ENCODE measurements at regions of chr3 and their contacts with region 1.

Region 1: DNA sequence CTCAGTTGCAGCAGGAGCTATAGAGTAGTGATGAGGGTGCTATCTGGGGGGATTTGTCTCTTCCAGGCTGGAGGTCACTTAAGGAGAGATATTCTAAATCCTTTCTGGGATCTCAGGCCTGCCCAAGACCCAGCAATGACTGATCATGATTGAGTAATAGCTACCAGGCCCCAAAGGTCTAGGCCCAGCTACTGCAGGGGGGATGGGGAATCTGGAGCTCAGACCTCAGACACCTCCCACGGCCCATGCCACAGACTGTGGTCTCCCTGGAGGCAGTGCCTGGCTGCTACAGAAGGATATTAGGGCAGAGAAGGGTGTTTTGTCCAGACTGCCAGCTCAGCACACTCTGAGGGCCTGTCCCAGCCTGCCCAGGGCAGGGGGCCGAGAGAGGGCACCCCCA is 6.9 kb downstream of the SLC38A3 start:
- DNase-seq: no peak
- H3K4me3 ChIP-seq: no peak overlapping the region
- H3K27ac ChIP-seq: peak overlapping the region in 54 of 59 donors; percentile 76 to 99 (median 95)
- H3K27me3 ChIP-seq: no peaks in the 10 kb centered on the region
- CTCF ChIP-seq: no peak

Region 2: DNA sequence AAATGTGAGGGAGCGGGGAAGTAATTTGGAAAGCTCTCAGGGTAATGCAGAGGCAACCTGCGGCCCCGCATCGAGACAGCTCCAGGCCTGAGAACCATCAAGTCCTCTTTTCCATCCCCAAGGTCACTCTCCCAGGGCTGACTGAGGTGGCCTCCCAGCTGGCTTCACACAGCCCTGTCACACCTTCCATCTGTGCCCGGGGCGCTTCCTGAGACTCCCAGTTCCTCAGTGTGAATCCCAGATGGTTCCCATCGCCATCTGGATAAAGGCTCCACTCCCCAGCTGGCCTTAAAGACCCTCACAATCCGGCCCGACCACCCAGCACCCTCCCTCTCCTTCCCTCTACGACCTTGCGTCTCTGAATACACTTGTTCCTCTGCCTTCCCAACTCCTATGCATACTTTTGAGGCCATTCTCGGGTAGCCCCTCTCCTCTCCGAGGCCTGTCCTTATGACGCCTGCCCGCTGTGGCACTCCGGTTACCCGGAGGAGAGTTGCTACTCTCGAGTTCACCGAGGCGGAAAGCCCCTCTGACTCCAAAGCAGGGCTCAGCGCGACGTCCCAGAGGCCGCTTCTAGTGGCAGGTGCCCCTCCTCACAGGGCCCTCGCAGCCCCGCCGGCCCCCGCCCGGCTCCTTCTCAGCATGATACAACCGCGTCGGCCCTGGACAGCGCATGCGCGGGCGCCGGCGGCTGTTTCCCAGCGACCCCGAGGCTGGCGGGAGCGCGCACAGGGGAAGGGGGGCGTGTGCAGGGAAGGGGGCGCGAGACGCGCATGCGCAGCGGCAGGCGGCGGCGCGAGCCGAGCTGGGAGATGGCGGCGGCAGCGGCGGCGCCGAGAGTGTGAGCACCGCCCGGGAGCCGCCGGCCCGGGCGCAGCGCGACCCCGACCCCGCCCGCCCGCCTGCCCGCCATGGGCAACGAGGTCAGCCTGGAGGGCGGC is 658.0 kb before region 1 on chr3 and contains the start of gene BSN:
- intact Hi-C with region 1: loop called in 1 of 2 experiments (anchors 10 kb)
- DNase-seq: peak; percentile 82 to 92 (median 88)
- H3K4me3 ChIP-seq: peak within 1 kb of the TSS; percentile 66 to 95 (median 86)
- H3K27ac ChIP-seq: peak within 1 kb of the TSS in 58 of 59 donors; percentile 49 to 98 (median 86)
- H3K27me3 ChIP-seq: no peaks in the 10 kb centered on the region
- CTCF ChIP-seq: peak in 23 of 56 donors; percentile 9 to 40 (median 26)
- total RNA-seq, gene BSN: 47.8 to 218 (median 156) TPM

Region 3: GRCh38 chr3:49998326-49998725 is 213.6 kb before region 1 on chr3:
- intact Hi-C with region 1: no loop called
- DNase-seq: no peak
- H3K4me3 ChIP-seq: no peak overlapping the region
- H3K27ac ChIP-seq: no peak overlapping the region
- H3K27me3 ChIP-seq: no peaks in the 10 kb centered on the region
- CTCF ChIP-seq: no peak

Region 4: DNA sequence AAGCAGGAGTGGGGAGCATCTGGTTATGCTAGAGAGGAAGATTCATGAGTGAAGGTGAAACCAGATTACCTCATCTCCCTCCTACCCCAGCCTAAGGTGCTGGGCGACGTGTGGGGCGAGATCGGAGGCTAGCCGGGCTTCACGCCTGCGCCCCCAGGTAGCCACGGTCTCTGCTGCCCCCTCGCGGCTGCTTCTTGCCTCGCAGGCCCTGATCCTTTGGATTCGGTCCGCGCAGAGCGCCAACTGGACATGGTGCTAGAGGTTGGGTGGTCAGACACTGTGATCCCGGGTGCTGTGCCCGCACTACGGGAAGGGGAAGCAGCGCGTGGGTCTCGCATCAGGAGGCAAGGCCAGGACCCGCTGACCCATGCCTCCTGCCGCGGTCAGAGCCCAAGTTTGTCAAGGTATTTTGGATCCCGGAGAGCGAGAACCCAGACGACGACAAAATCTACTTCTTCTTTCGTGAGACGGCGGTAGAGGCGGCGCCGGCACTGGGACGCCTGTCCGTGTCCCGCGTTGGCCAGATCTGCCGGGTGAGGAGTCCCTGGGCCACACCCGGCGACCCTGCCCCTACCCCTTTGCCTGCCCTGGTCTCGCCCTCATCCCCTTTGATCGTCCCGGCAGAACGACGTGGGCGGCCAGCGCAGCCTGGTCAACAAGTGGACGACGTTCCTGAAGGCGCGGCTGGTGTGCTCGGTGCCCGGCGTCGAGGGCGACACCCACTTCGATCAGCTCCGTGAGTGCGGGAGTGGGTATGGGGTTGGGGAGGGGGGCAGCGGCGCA is 61.2 kb after region 1 on chr3:
- intact Hi-C with region 1: no loop called
- DNase-seq: peak; percentile 81 to 92 (median 89)
- H3K4me3 ChIP-seq: peak overlapping the region; percentile 0 to 69 (median 48)
- H3K27ac ChIP-seq: peak overlapping the region; percentile 65 to 100 (median 100)
- H3K27me3 ChIP-seq: peaks cover 0 to 35% (median 14%) of the 10 kb centered on the region in 45 donors
- CTCF ChIP-seq: peak; percentile 97 to 100 (median 99)